Heart right ventricle (tissue), 16 donors: ENCODE measurements at regions of chr1 and their contacts with region 1.

Region 1: DNA sequence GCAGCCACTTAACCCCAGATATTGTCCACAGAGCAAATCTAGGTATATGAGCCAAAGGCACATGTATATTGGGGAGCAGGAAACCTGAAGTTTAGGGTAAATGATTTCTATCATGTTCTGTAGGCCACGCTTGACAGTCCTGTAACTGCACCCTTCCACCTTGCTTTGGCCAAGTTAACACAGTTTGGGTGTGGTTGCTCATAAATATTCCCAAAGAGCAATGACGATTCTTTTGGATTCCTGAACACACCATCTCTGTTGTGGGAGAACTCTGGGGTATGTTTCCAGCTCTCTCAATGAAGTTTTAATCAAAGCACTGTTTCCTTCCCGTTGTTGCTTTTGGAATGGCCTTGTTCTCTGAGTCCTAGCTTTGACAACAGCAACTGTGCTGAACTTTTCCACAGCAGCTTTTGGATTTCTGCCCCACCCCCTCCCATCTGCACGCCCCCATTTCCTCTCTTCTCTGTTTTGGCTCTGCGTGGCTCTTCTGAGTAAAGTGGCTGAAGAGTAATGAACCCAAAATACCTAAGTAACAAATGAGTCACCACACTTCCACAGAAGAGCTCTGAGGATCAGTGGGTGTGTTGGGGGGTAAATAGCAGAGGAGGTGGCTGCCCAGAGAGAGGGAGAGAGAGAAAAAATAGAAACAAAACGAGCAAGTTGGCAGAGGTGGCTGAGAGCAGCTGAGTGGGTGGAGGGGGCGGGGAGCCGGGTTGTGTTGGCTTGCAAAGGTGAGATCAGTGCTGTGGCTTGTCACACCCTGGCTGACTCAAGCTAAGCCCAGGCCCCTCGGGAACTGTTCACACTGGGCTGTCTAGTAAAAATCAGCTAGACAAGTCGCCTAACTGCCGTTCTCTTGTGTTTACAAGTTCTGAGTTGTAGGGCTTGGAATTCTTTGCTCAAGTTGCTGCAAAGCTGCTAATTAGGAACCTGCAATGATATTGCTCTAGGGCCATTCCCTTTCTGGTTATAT is 26.9 kb upstream of the RAP1A start:
- DNase-seq: peak; percentile 85 to 91
- ATAC-seq: peak; percentile 86 to 98 (median 94)
- H3K4me3 ChIP-seq: peak overlapping the region in 5 of 10 donors; percentile 0 to 27 (median 11)
- H3K27ac ChIP-seq: peak overlapping the region; percentile 58 to 90 (median 88)
- H3K4me1 ChIP-seq: peaks cover 15 to 56% (median 48%) of the 10 kb centered on the region in 9 donors
- H3K27me3 ChIP-seq: no peaks in the 10 kb centered on the region
- CTCF ChIP-seq: no peak

Region 2: GRCh38 chr1:111507411-111508201 is 85.1 kb before region 1 on chr1:
- intact Hi-C with region 1: loop called in 3 of 10 experiments (anchors 2 to 5 kb)
- DNase-seq: peak; percentile 73 to 79
- ATAC-seq: peak; percentile 59 to 85 (median 75)
- H3K4me3 ChIP-seq: peak overlapping the region in 9 of 10 donors; percentile 6 to 52 (median 31)
- H3K27ac ChIP-seq: peak overlapping the region; percentile 61 to 99 (median 90)
- H3K4me1 ChIP-seq: peaks cover 20 to 95% (median 48%) of the 10 kb centered on the region in 9 donors
- H3K27me3 ChIP-seq: no peaks in the 10 kb centered on the region
- CTCF ChIP-seq: no peak

Region 3: GRCh38 chr1:111516005-111516535 is 76.6 kb before region 1 on chr1:
- intact Hi-C with region 1: loop called in 6 of 10 experiments (anchors 2 to 5 kb)
- DNase-seq: peak; percentile 47 to 86
- ATAC-seq: peak; percentile 64 to 87 (median 82)
- H3K4me3 ChIP-seq: peak overlapping the region; percentile 9 to 56 (median 48)
- H3K27ac ChIP-seq: peak overlapping the region; percentile 82 to 96 (median 90)
- H3K4me1 ChIP-seq: peaks cover 19 to 71% (median 55%) of the 10 kb centered on the region in 9 donors
- H3K27me3 ChIP-seq: no peaks in the 10 kb centered on the region
- CTCF ChIP-seq: peak; percentile 9 to 63 (median 48)

Region 4: DNA sequence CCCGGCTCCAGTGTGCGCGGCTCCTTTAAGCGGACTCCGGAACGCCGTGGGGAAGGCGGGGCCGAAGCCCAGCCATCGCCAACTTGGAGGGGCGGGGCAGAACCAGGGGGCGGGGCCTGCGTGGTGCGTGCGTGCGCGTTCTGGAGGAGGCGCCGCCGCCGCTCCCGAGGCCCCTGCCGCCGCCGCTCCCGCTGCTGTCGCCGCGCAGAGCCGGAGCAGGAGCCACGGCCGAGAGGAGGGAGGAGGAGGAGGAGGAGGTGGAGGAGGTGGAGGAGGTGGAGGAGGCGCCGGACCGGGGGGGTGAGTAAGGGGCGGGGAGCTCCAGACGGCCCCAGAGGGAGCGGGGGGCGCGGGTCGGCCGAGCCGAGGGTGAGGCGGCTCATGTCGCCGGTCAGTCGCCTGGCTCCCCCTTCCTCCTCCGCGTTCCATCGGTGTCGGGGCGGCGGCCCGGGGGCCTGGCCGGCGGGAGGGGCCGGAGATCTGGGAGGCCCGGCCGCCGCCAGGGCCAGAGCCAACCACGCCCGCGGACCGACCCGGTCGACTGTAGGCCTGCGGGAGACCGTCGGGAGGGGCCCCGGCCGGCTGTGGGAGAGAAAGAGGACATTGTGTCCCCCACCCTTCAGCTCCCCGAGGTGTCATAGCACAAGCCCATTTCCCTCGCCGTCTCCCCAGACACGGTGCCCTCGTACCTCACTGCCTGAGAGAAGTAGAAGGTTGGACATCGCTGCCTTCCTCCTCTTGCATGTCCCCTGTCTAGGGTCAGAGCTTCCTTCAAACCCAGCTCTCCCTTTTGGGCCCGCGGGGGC is 27.2 kb after region 1 on chr1 and contains the start of gene RAP1A:
- intact Hi-C with region 1: loop called in 5 of 10 experiments (anchors 1 to 5 kb)
- DNase-seq: peak; percentile 96 to 98
- ATAC-seq: peak; percentile 96 to 98 (median 97)
- H3K4me3 ChIP-seq: peak within 1 kb of the TSS; percentile 70 to 97 (median 89)
- H3K27ac ChIP-seq: peak within 1 kb of the TSS; percentile 97 to 100 (median 98)
- H3K4me1 ChIP-seq: peaks cover 5 to 79% (median 56%) of the 10 kb centered on the region in 9 donors
- H3K27me3 ChIP-seq: no peaks in the 10 kb centered on the region
- CTCF ChIP-seq: no peak
- total RNA-seq, gene RAP1A: 83.4 to 120 (median 102) TPM

Region 5: GRCh38 chr1:111628153-111628552 is 35.5 kb after region 1 on chr1:
- intact Hi-C with region 1: loop called in 1 of 10 experiments (anchors 5 kb)
- DNase-seq: no peak
- ATAC-seq: no peak
- H3K4me3 ChIP-seq: no peak overlapping the region
- H3K27ac ChIP-seq: peak overlapping the region in 1 of 10 donors; percentile 2
- H3K4me1 ChIP-seq: peaks cover 0 to 99% (median 81%) of the 10 kb centered on the region in 9 donors
- H3K27me3 ChIP-seq: no peaks in the 10 kb centered on the region
- CTCF ChIP-seq: no peak